Panc1 (cell line): ENCODE measurements at regions of chr16 and their contacts with region 1.

Region 1: DNA sequence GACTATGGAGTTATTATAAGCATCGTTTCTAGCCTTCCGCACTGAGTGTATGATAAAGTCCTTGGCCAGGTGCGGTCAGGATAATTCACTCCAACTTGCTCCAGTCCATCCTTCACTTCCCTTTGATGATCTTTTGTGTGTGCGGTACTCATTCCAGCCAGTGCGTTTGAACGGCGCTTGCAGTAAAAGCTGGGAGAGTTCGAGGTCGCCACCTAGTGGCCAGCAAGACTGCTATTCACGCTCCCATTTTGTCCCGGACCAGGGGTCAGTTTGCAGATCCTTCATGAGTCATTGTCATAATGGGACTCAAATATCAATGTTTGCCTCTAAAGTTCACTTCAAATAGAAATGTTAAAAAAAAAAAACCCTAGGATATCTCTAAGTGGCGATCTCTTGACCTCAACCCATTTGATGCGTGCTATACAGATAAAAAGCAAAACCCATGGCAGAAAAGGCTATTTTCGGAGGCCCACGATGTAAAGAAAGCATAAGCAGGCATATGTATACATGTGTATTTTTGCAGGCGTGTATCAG is 417.1 kb downstream of the TMEM114 start:
- DNase-seq: peak; percentile 45
- ATAC-seq: peak; percentile 93
- H3K4me3 ChIP-seq: no peak overlapping the region
- H3K27ac ChIP-seq: no peak overlapping the region
- H3K4me1 ChIP-seq: no peaks in the 10 kb centered on the region
- H3K27me3 ChIP-seq: peaks cover 6% of the 10 kb centered on the region
- CTCF ChIP-seq: peak; percentile 93

Region 2: DNA sequence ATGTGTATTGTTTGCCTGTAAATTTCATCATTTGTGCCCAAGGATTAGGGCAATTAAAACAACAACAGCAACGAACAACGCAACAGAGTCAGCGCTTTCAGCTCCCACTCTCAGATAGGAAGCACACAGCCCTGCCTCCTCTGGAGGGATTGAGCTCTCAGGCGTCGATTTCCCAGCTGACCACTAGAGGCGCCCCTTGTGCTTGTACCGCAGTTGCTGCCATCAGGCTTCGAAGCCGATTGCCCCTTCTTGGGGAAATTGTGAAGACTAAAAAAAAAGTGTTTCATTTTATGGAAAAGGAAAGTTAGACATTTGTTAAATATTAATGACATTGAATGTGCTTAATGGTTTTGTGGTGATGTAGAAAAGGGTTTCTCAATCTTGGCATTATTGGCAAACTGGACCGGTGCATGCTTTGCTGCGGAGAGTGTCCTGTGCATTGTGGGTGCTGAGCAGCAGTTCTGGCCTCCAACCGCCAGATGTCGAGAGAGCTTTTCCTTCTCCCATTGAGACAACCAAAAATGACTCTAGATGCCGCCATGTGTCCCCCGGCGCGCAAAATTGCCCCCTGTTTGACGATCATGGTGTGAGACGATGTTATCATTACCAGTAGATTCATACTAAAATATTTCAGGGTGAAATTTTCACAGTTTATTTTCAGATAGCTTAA is 1490.9 kb before region 1 on chr16:
- CTCF ChIA-PET with region 1: no interaction called
- POLR2A ChIA-PET with region 1: no interaction called
- in situ Hi-C with region 1: no loop called
- intact Hi-C with region 1: loop called (anchors 5 kb)
- DNase-seq: peak; percentile 7
- ATAC-seq: no peak
- H3K4me3 ChIP-seq: no peak overlapping the region
- H3K27ac ChIP-seq: no peak overlapping the region
- H3K4me1 ChIP-seq: no peaks in the 10 kb centered on the region
- H3K27me3 ChIP-seq: no peaks in the 10 kb centered on the region
- CTCF ChIP-seq: peak; percentile 85

Region 3: DNA sequence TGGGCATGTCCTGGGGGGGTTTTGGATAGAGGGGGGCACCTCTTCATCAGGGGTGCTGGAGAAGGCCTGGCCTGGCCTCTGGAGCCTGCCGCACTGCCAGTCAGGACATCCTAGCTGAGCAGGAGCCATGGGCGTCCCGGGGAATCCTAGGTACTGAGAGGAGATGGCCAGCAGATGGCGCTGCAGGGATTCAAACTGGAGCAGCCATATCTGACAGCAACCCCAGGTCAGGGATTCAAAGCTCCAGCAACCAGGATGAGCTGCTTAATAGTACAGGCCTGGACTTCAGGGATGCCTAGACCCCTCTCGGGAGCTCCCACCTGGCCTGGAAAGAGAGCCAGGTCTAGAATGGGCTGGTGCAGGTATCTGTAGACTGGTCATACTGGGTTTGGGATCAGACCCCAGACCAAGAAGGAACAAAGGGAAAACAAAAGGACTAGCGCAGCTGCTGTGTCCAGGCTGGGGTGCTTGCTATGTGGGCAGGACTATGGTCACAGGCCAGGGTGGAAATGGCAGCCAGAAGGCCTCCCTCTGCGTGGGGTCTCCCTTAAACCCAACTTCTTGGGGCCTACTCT is 1147.5 kb before region 1 on chr16:
- CTCF ChIA-PET with region 1: no interaction called
- POLR2A ChIA-PET with region 1: no interaction called
- in situ Hi-C with region 1: no loop called
- intact Hi-C with region 1: loop called (anchors 5 kb)
- DNase-seq: peak; percentile 20
- ATAC-seq: peak; percentile 96
- H3K4me3 ChIP-seq: no peak overlapping the region
- H3K27ac ChIP-seq: no peak overlapping the region
- H3K4me1 ChIP-seq: no peaks in the 10 kb centered on the region
- H3K27me3 ChIP-seq: no peaks in the 10 kb centered on the region
- CTCF ChIP-seq: peak; percentile 85

Region 4: DNA sequence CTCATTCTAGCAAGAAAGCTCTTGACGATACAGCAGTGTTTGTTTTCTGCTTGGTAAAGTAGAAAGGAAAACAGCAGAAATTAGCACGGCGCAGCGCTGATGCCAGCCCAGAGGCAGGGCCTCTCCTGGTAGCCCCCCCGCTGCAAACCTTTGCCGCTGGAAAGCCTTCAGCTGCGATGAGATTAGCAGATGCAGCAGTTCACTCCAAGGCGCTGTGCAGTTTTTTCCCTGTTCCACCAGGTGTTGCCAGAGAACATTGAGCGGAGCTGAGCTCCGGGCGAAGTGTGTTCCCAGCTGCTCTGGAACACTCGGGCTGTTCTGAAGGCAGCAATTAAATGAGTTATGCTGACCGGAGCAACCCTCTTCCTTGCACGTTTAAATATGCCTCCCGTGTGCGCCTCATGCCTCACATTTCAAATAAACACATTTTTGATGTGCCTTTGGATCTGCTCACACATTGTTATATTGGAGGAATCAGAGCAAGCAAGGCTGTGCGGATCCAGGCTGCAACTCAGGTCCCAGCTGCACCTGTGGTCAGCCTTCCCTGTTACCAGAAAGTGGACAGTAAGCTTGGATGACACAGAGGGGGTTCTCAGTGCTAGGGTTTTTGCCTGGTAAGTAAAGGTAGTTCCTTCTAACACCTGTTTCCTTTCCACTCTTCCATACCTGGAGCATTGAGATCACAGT is 767.9 kb before region 1 on chr16:
- CTCF ChIA-PET with region 1: no interaction called
- POLR2A ChIA-PET with region 1: no interaction called
- in situ Hi-C with region 1: no loop called
- intact Hi-C with region 1: loop called (anchors 10 kb)
- DNase-seq: no peak
- ATAC-seq: peak; percentile 86
- H3K4me3 ChIP-seq: no peak overlapping the region
- H3K27ac ChIP-seq: no peak overlapping the region
- H3K4me1 ChIP-seq: no peaks in the 10 kb centered on the region
- H3K27me3 ChIP-seq: no peaks in the 10 kb centered on the region; the same call in none of the 2 replicates
- CTCF ChIP-seq: peak; percentile 71